GM13977 (cell line): ENCODE measurements at regions of chr7 and their contacts with region 1.

Region 1: DNA sequence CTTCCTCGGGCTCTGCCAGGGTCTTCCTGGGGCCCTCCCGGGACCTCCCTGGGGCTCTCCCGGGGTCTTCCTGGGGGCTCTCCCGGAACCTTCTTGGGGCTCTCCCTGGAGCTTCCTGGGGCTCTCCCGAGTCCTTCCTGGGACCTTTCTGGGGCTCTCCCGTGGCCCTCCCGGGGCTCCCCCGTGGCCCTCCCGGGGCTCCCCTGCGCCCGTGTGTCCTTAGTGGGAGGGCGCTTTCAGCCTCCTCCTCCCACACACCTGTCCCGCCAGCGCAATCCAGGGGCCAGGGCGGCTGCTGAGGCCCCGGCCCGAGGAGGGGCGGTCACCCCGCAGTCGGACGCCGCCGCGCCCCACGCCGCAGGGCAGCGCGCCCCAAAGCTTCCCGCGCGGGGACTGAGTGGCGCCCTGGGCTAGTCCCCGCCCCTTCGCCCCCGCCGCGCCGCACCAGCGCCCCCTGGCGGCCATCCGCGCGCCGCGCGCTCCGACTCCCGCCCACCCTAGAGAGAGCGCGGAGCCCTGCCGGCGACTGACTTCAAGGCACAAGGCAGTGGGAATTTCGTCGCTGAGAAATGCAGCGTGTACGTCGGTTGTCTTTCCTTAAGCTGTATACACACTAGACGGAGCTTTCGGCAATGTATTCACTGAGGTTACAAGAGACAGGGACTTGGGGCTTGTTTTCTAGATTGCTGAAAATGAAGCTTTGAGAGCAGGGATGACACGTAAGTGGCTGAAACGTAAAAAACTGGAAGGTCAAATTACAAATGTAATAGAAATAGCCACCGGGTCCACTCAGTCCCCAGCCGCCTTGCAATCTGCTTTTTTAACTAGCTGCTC is 47.1 kb downstream of the INSIG1 start:
- DNase-seq: peak; percentile 90
- CTCF ChIP-seq: peak; percentile 87

Region 2: GRCh38 chr7:154927624-154928143 is 417.1 kb before region 1 on chr7:
- in situ Hi-C with region 1: loop called (anchors 25 kb)
- DNase-seq: peak; percentile 55
- CTCF ChIP-seq: peak; percentile 64

Region 3: GRCh38 chr7:155543011-155543876 is 198.4 kb after region 1 on chr7:
- in situ Hi-C with region 1: no loop called
- DNase-seq: no peak
- CTCF ChIP-seq: no peak

Region 4: GRCh38 chr7:156039971-156040677 is 695.3 kb after region 1 on chr7:
- in situ Hi-C with region 1: no loop called
- DNase-seq: no peak
- CTCF ChIP-seq: no peak